ENCODE measurements at regions of chr2 and their contacts with region 1.

Region 1: DNA sequence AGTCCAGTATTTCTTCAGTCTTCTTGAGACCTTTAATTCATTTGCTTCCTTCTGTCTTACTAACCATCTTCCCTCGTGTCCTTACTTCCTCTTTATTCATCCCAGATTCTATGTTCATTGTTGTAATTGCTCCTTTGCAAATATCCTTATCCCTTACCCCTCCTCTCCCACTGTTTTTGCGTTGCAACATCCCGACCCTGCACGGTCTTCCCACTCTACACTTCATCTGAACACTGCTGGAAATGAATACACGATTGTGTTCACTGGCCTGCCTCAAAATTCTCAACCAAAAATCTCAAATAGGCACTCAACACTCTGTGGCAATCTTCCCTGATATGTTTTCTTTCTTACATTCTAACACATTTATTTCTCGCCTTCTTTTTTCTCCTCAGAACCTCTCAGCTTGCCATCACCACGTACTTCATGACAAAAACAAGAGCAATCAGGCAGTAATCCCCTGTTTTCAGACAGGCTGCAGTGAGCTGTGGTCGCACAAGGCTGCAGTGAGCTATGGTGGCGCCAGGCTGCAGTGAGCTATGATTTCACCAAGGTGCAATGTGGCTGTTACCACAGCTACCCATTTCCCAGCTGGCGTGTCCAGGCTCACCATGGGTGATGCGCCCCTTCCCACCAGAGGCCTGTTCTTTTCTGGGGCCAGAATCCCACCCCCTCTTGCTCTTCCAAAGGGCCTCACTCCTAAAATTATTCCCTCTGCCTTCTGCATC is 25.7 kb downstream of the TCF23 start:
- DNase-seq: no peak
- ATAC-seq: no peak
- H3K4me3 Mint-ChIP-seq: no peak overlapping the region
- H3K27ac Mint-ChIP-seq: no peak overlapping the region
- H3K4me1 Mint-ChIP-seq: peaks cover 2% of the 10 kb centered on the region
- H3K27me3 Mint-ChIP-seq: peaks cover 32% of the 10 kb centered on the region

Region 2: DNA sequence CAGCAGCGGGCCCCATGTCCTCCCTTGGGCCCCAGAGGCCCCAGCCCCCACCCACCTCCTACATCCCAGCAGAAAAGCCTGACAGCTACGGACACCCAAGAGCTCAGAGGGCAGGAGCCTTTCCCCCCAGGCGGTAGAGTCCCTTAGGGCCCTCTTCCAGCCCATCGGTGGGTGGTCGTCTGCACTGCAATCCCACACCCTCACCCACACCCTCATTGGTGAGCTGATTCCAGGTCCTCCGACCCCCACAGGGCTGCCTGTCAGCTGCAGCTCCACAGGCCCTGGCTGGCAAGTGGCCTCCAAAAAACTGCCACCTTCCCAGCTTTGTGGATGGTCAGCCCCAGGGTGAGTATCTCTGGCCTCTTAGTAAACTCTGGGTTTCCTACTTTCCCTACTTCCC is 15.2 kb before region 1 on chr2:
- CTCF ChIA-PET with region 1: interaction called, 12 read pairs
- DNase-seq: no peak
- ATAC-seq: no peak
- H3K4me3 Mint-ChIP-seq: no peak overlapping the region
- H3K27ac Mint-ChIP-seq: no peak overlapping the region
- H3K4me1 Mint-ChIP-seq: peaks cover 3% of the 10 kb centered on the region
- H3K27me3 Mint-ChIP-seq: peaks cover 3% of the 10 kb centered on the region

Region 3: DNA sequence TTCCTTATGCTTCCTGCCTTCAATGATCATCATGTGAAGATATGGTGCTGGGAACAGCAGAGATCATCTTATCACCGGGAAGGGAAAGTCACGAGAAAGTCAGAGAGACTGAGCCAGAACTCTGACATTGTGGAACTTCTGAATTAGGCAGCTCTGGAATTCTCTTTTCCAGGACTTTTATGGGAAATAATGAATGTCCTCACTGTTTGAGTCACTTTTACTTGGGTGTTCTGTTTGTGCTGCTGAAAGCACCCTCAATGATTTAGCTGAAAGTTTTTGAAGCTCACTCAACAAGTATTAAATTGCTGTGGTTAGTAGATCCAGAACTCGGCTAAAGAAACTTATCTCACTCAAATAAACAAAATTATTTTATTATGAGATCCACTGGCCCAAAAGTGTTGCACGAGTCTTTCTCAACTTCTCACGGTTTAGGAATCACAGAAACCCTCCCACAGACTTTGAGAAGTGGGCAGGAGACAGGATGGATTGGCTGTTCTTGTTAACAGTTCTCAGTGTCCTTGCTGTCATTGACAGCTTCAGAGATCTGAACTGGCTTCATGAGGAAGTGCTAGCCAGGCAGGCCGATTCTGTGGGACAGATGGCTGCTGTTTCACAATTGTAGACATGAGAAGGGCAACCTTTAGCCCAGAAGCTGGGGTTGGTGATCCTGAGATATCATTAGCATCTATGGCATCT is 11.0 kb after region 1 on chr2:
- CTCF ChIA-PET with region 1: interaction called, 11 read pairs
- DNase-seq: no peak
- ATAC-seq: no peak
- H3K4me3 Mint-ChIP-seq: no peak overlapping the region
- H3K27ac Mint-ChIP-seq: no peak overlapping the region
- H3K4me1 Mint-ChIP-seq: peaks cover 2% of the 10 kb centered on the region
- H3K27me3 Mint-ChIP-seq: peaks cover 54% of the 10 kb centered on the region

Region 4: DNA sequence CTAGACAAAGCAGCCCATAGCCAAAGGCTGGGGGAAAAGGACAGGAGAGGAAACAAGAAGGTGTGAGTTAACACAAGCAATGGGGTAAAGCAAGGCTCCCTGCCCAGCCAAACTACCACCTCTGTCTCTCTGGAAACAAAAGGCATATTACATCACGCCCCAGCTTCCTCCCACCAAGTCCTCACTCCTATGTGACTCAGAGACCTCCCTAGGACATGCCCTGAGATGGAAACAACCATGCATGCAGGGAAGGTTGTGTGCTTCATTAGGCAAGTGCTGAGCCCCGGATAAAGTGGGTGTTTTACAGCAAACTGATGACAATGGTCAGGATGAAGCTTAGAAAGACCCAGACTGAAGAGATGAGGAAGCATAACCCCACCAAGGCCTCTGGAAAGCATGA is 28.4 kb after region 1 on chr2:
- CTCF ChIA-PET with region 1: interaction called, 11 read pairs
- DNase-seq: no peak
- ATAC-seq: no peak
- H3K4me3 Mint-ChIP-seq: no peak overlapping the region
- H3K27ac Mint-ChIP-seq: no peak overlapping the region
- H3K4me1 Mint-ChIP-seq: peaks cover 10% of the 10 kb centered on the region
- H3K27me3 Mint-ChIP-seq: no peaks in the 10 kb centered on the region

Measured in activated CD8-positive, alpha-beta memory T cell treated with anti-CD3 and anti-CD28 coated beads, Interleukin-2, amount 10 ng/mL, durations not matched to agents 7 days and 5 days (primary cell).